MCF 10A (cell line): ENCODE measurements at regions of chr5 and their contacts with region 1.

Region 1: DNA sequence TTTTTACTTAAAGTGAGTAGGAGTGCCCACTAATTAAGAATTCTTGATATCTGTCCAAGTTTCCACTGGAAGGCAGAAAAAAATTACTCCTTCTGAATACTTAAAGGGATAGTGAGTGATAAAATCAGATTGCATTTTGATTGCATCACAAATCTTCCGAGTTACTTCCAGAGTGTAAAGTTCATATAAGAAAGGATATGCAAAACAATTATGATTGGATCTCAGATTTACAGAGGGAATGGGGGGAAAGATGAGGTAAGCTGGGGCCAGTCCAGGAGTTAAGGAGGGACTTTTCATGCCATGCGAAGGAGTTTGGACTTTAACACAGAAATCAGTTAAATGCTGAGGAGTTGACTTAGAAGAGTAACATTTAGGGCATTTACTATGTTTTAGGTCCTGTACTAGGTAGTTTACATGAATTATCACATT is 9.3 kb upstream of the RNF145 start:
- DNase-seq: peak; percentile 36
- H3K4me3 Mint-ChIP-seq: no peak overlapping the region
- H3K27ac Mint-ChIP-seq: peak overlapping the region; percentile 35
- H3K4me1 Mint-ChIP-seq: peaks cover 59% of the 10 kb centered on the region
- H3K27me3 Mint-ChIP-seq: no peaks in the 10 kb centered on the region
- CTCF ChIP-seq: no peak

Region 2: GRCh38 chr5:159178978-159179377 is 39.6 kb before region 1 on chr5:
- CTCF ChIA-PET with region 1: interaction called, 4 read pairs
- POLR2A ChIA-PET with region 1: interaction called, 14 read pairs
- intact Hi-C with region 1: no loop called
- DNase-seq: peak; percentile 95
- H3K4me3 Mint-ChIP-seq: peak overlapping the region; percentile 54
- H3K27ac Mint-ChIP-seq: peak overlapping the region; percentile 96
- H3K4me1 Mint-ChIP-seq: peaks cover 77% of the 10 kb centered on the region
- H3K27me3 Mint-ChIP-seq: no peaks in the 10 kb centered on the region
- CTCF ChIP-seq: no peak

Region 3: DNA sequence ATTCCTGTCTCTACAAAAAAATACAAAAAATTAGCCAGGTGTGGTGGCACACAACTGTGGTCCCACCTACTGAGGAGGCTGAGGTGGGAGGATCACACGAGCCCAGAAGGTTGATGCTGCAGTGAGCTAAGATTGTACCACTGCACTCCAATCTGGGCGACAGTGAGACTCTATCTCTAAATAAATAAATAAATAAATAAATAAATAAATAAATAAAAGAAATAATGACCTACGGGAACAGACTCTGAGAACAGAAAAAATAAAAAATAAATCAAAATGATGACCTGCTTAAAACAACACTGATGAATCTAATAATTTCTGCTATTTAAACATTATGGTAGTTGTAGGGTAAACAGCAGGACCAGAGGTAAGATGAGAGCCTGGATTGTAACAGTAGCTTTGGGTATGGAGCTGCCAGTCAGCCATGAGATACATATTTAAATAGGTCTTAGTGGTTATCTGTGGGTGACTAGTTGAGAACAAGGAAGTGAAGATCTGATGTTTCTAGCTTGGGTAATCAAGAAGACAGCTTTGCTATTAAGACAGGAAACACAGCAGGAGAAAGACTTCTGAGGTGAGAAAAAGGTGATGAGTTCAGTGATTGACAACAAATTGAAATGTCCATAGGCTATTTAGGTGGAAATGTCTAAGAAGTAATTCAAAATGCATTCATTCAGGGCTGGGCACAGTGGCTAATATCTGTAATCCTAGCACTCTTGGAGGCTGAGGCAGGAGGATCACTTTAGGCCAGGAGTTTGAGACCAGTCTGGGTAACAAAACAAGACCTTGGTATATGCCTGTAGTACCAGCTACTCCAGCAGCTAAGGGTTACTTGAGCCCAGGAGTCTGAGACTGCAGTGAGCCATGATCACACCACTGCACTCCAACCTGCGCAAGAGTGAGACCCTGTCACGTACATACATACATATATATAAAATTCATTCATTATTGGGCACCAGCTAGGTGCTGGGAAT is 20.3 kb before region 1 on chr5:
- CTCF ChIA-PET with region 1: interaction called, 5 read pairs
- POLR2A ChIA-PET with region 1: interaction called, 354 read pairs
- intact Hi-C with region 1: no loop called
- DNase-seq: no peak
- H3K4me3 Mint-ChIP-seq: no peak overlapping the region
- H3K27ac Mint-ChIP-seq: no peak overlapping the region
- H3K4me1 Mint-ChIP-seq: peaks cover 61% of the 10 kb centered on the region
- H3K27me3 Mint-ChIP-seq: no peaks in the 10 kb centered on the region
- CTCF ChIP-seq: no peak